ENCODE measurements at regions of chr17 and their contacts with region 1.

Region 1: GRCh38 chr17:45073414-45074070 is 12.4 kb downstream of the NMT1 start:
- DNase-seq: peak; percentile 93
- H3K4me3 ChIP-seq: no peak overlapping the region
- H3K27ac ChIP-seq: peak overlapping the region; percentile 92
- H3K27me3 ChIP-seq: no peaks in the 10 kb centered on the region
- CTCF ChIP-seq: no peak

Region 2: DNA sequence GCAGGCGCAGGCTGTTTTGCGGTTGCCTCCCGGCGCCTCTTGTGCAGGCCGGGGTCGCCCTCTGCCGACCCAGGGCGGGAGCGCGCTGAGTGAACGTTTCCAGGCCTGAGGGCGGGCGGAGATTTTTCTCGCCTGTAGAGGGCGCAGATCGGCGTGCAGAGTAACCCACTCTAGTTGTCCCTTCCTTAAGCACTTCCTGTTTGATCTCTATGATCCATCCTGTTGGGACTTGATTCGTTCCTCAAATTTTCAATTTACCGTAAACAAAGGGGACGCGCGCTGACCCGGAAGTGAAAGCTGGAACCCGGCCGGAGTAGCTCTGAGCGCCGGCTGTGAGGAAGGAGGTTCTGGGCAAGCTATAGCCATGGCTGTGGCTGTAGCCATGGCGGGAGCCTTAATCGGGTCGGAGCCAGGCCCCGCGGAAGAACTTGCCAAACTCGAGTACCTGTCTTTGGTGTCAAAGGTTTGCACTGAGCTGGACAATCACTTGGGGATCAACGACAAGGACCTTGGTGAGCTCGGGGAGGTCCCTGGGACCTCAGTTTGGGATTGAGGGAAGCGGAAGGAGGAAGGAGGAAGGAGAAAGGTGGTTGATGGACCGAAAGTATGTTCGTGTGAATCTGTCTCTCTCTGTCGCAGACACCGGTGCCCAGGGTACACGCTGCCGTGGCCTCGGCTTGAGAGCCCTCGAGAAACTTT is 1589.7 kb before region 1 on chr17 and contains the start of gene DHX8:
- CTCF ChIA-PET with region 1: no interaction called
- POLR2A ChIA-PET with region 1: no interaction called
- DNase-seq: peak; percentile 97
- H3K4me3 ChIP-seq: peak within 1 kb of the TSS; percentile 99
- H3K27ac ChIP-seq: peak within 1 kb of the TSS; percentile 87
- H3K27me3 ChIP-seq: no peaks in the 10 kb centered on the region
- CTCF ChIP-seq: peak; percentile 100
- polyA plus RNA-seq, gene DHX8: 46.0 and 47.3 TPM in 2 replicates

Region 3: DNA sequence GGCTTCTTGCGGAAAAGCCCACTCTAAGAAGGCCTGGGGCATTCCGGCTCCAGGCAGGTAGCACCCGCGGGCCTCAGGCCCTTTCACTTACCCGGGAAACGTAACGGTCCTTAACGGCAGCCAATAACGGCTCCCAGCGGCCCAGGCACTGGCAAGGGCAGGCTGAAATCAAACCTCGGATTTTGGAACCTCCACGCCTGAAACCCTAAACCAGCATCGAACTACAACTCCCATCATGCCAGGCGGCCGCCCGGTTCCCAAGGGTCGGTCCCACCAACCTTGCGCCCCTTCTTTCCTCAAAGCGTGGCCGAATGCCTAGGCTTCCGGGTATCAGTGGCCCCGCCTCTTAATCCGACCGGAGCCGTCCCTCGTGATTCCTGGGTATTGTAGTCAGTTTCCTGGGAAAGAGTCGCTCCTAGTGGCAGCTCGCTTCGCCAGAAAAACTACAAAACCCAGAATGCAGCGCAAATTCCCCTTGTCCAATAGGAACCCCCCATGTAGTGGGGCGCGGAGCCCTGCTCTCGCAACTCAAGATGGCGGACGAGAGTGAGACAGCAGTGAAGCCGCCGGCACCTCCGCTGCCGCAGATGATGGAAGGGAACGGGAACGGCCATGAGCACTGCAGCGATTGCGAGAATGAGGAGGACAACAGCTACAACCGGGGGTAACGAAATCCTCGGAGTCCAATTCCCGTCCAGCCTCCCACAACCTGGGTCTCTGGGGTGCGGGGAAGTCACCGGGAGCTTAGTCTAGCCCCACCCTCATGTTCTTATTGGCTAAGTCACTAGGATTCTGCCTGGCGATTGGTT is 12.5 kb before region 1 on chr17 and contains the start of gene NMT1:
- CTCF ChIA-PET with region 1: interaction called, 4 read pairs
- POLR2A ChIA-PET with region 1: interaction called, 26 read pairs
- DNase-seq: peak; percentile 98
- H3K4me3 ChIP-seq: peak within 1 kb of the TSS; percentile 91
- H3K27ac ChIP-seq: peak within 1 kb of the TSS; percentile 84
- H3K27me3 ChIP-seq: no peaks in the 10 kb centered on the region
- CTCF ChIP-seq: no peak
- polyA plus RNA-seq, gene NMT1: 60.6 and 63.6 TPM in 2 replicates